Activated T-helper 1 cell treated with anti-CD3 and anti-CD28 coated beads, Interleukin-12 subunit alpha, Interleukin-12 subunit beta, Interleukin-2, Interleukin-4 antibody, amounts not matched to agents 30 ng/mL and 10 ng/mL and 1 ng/mL, durations not matched to agents 14 hours and 24 hours and 36 hours (primary cell): ENCODE measurements at regions of chr19 and their contacts with region 1.

Region 1: GRCh38 chr19:37172368-37173366 is at the start of gene ZNF585A:
- DNase-seq: peak; percentile 74
- H3K4me3 Mint-ChIP-seq: no peak within 1 kb of the TSS
- H3K27ac Mint-ChIP-seq: no peak within 1 kb of the TSS
- H3K4me1 Mint-ChIP-seq: no peaks in the 10 kb centered on the region
- H3K27me3 Mint-ChIP-seq: no peaks in the 10 kb centered on the region
- total RNA-seq, gene ZNF585A: 1.2 and 2.6 TPM in 2 replicates

Region 2: GRCh38 chr19:36973021-36973843 is 199.4 kb before region 1 on chr19:
- intact Hi-C with region 1: loop called (anchors 1 kb)
- DNase-seq: peak; percentile 67
- H3K4me3 Mint-ChIP-seq: peak overlapping the region; percentile 98
- H3K27ac Mint-ChIP-seq: peak overlapping the region; percentile 87
- H3K4me1 Mint-ChIP-seq: peaks cover 12% of the 10 kb centered on the region
- H3K27me3 Mint-ChIP-seq: no peaks in the 10 kb centered on the region